CD8-positive, alpha-beta T cell (primary cell): ENCODE measurements at regions of chr7 and their contacts with region 1.

Region 1: GRCh38 chr7:94969434-94970084 is 62.2 kb downstream of the PPP1R9A start:
- DNase-seq: no peak
- ATAC-seq: no peak
- H3K4me3 ChIP-seq: no peak overlapping the region
- H3K4me3 Mint-ChIP-seq: no peak overlapping the region
- H3K27ac ChIP-seq: no peak overlapping the region
- H3K27ac Mint-ChIP-seq: no peak overlapping the region
- H3K4me1 ChIP-seq: no peaks in the 10 kb centered on the region
- H3K4me1 Mint-ChIP-seq: no peaks in the 10 kb centered on the region
- H3K27me3 ChIP-seq: no peaks in the 10 kb centered on the region
- H3K27me3 Mint-ChIP-seq: no peaks in the 10 kb centered on the region
- CTCF ChIP-seq: no peak

Region 2: DNA sequence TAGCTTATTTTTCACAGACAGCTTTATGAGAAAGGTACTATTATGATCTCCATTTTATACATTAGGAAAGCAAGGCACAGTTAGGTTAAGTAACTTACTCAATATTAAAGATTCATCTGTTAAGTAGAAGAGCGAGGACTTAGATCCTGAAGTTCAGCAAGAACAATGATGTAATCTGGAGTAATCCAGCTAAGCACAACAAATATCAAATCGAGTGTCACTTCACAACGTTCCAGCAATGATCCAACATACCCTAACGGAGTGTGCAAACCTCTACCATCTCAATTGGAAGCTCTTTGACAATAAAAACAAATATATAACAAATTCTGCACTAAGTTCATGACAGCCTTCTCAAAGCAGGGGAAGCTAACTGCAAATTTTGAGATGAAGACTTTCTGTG is 1516.3 kb before region 1 on chr7:
- CTCF ChIA-PET with region 1: no interaction called
- POLR2A ChIA-PET with region 1: no interaction called
- intact Hi-C with region 1: loop called in 1 of 2 experiments (anchors 5 kb)
- DNase-seq: no peak
- ATAC-seq: no peak
- H3K4me3 ChIP-seq: no peak overlapping the region
- H3K4me3 Mint-ChIP-seq: no peak overlapping the region
- H3K27ac ChIP-seq: no peak overlapping the region
- H3K27ac Mint-ChIP-seq: no peak overlapping the region
- H3K4me1 ChIP-seq: no peaks in the 10 kb centered on the region
- H3K4me1 Mint-ChIP-seq: no peaks in the 10 kb centered on the region
- H3K27me3 ChIP-seq: no peaks in the 10 kb centered on the region
- H3K27me3 Mint-ChIP-seq: peaks cover 2% of the 10 kb centered on the region
- CTCF ChIP-seq: no peak

Region 3: DNA sequence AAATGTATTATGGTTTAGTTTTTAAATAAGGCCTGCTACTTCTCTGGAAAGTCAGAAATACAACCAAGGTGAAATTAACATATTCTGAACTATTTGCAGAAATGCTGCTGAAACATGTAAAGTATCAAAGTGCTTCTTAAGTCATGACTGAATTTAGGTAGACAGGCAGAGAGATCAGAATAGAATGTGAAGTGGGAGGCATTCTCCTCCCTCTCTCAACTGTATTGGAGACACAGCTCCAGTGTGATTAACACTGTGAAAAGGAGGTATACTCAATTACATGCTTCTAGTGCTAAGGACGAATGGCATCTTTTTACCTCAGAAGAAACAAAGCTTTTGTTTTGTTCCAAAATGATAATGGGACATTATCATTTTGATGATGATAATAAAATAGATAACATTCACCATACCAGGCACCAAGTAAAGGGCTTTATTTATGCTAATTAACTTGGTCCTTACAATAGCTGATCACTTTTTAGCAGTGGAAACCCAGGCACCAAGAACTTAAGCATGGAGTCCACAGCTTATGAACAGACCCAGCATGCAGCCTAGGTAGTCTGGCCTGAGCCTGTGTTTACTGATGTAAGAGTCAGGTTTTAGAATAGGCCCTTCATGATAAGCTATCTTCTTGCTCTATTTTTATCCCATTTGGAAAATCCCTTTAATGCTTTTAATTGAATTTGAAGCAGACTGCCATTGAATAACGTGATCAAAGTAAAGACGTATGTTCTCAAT is 36.1 kb before region 1 on chr7:
- CTCF ChIA-PET with region 1: no interaction called
- POLR2A ChIA-PET with region 1: no interaction called
- intact Hi-C with region 1: no loop called
- DNase-seq: no peak
- ATAC-seq: no peak
- H3K4me3 ChIP-seq: no peak overlapping the region
- H3K4me3 Mint-ChIP-seq: no peak overlapping the region
- H3K27ac ChIP-seq: no peak overlapping the region
- H3K27ac Mint-ChIP-seq: no peak overlapping the region
- H3K4me1 ChIP-seq: no peaks in the 10 kb centered on the region
- H3K4me1 Mint-ChIP-seq: no peaks in the 10 kb centered on the region
- H3K27me3 ChIP-seq: no peaks in the 10 kb centered on the region
- H3K27me3 Mint-ChIP-seq: no peaks in the 10 kb centered on the region
- CTCF ChIP-seq: no peak